ENCODE measurements at regions of chr1 and their contacts with region 1.

Region 1: DNA sequence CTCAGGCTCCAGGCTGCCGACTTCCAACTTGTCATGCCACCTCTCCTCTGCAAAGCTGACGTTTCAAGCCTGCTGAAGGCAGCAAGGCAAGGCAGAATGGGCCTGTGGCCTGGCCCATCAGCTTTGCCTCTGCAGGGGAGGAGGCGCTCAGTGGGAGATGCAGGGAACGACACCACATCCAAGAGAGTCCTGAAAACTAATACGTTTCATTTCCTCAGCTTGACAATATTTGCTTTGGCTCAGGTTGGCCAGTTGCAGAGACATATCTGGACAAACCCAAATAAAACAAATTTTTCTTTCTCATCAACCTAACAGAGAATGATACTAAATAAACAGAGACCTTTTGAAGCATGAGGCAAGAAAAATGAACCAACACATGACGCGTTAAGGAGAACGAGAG is 35.3 kb downstream of the BEND5 start:
- DNase-seq: no peak
- ATAC-seq: no peak
- H3K4me3 ChIP-seq: no peak overlapping the region
- H3K27ac ChIP-seq: peak overlapping the region in 1 of 2 donors; percentile 85
- H3K4me1 ChIP-seq: peaks cover 4 to 8% of the 10 kb centered on the region in 2 donors
- H3K27me3 ChIP-seq: no peaks in the 10 kb centered on the region

Region 2: GRCh38 chr1:48196237-48196636 is 545.2 kb before region 1 on chr1:
- intact Hi-C with region 1: no loop called
- DNase-seq: no peak
- ATAC-seq: no peak
- H3K4me3 ChIP-seq: no peak overlapping the region
- H3K27ac ChIP-seq: no peak overlapping the region
- H3K4me1 ChIP-seq: no peaks in the 10 kb centered on the region
- H3K27me3 ChIP-seq: no peaks in the 10 kb centered on the region

Region 3: GRCh38 chr1:48776393-48777218 is 35.2 kb after region 1 on chr1 and contains the start of gene BEND5:
- intact Hi-C with region 1: loop called in 1 of 2 experiments (anchors 5 kb)
- DNase-seq: peak; percentile 66 to 86
- ATAC-seq: peak; percentile 78
- H3K4me3 ChIP-seq: peak within 1 kb of the TSS; percentile 96 to 97
- H3K27ac ChIP-seq: peak within 1 kb of the TSS; percentile 86 to 96
- H3K4me1 ChIP-seq: peaks cover 1 to 15% of the 10 kb centered on the region in 2 donors
- H3K27me3 ChIP-seq: no peaks in the 10 kb centered on the region
- total RNA-seq, gene BEND5: 6.6 to 11.2 TPM

Measured in aorta (tissue), 5 donors.